ENCODE measurements at regions of chr9 and their contacts with region 1.

Region 1: DNA sequence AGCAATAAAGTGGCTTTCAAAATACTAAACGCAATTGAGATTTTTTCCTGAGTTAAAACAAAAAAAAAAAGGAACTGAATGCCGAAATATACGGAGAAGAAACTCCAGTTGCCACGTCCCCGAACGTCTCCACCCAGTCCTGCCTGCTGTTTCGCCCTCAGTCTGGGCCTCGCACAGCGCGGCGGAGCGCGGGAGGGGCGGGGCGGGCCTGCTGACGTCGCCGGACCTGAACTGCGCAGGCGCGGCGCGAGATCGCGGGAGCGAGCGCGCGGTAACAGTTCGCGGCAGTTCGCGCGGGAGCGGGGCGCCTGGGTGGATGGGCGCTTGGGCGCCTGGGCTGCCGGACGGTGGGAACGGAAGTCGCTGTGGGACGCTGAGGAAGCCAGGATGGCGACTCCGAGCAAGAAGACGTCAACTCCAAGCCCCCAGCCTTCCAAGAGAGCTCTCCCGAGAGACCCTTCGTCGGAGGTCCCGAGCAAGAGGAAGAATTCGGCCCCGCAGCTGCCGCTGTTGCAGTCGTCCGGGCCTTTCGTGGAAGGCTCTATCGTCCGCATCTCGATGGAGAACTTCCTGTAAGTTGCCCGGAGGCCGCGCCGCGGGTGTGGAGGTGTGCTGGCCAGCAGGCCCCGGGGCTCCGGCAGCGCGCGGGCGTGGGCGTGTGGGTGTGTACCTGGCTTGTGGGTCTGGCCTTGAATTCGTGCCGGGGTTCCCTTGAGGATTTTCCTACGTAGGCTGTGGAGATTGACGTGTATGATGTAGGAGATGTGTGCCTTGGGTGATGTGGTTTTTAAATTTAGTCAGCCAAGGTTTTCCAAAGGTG is at the start of gene SMC5:
- DNase-seq: peak; percentile 81 to 94 (median 93)
- ATAC-seq: peak; percentile 95
- H3K4me3 ChIP-seq: peak within 1 kb of the TSS; percentile 96
- H3K4me3 Mint-ChIP-seq: peak within 1 kb of the TSS; percentile 87 to 95 (median 91)
- H3K27ac ChIP-seq: peak within 1 kb of the TSS; percentile 94
- H3K27ac Mint-ChIP-seq: peak within 1 kb of the TSS; percentile 93 to 99 (median 98)
- H3K4me1 ChIP-seq: peaks cover 24 to 34% of the 10 kb centered on the region in 2 donors
- H3K4me1 Mint-ChIP-seq: peaks cover 45 to 79% (median 69%) of the 10 kb centered on the region in 7 donors
- H3K27me3 ChIP-seq: no peaks in the 10 kb centered on the region
- H3K27me3 Mint-ChIP-seq: peaks cover 0 to 12% (median 0%) of the 10 kb centered on the region in 5 donors
- total RNA-seq, gene SMC5: 26.2 to 44.6 (median 36.1) TPM

Region 2: DNA sequence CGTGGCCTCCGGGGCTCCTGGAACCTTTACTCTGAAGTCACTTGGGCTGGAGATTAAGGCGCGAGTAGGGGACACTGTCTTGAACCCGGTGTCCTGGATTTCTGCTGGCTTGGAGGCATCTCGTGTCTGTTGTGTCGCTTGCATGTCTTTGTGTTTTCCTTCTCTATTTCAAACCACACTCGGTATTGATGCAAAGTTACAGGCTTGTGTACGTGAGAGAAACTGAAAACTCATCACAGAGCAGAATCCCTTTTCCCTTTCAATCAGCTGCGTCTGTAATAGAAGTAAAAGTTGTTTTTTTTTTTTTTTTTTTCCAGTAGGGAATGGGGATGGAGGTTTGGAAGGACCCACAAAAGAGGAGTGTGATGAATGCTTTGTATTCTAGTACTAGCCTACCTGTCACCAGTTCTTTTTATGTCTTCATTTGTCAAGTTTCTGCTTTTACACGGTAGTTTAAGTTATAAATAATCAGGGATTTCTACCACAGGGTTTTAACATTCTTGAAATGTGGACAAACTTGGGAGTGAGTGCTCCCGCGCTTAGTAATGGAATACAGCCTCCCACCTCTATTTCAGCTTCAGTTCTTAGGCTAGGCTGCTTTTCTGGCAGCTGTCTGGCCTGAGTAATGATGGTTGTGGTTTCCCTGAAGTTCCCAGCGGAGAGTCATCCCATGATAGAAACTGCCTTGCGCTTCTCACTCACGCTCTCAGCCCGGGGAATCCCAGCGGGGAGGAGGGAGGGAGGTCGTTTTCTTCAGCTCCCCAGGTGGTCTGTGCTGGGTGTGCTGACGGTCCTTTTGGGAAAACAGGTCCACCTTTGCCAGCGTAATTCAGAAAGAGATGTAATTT is 1084.1 kb before region 1 on chr9:
- CTCF ChIA-PET with region 1: no interaction called
- POLR2A ChIA-PET with region 1: no interaction called
- intact Hi-C with region 1: loop called in 1 of 2 experiments (anchors 5 kb)
- DNase-seq: peak in 1 of 9 donors; percentile 69
- ATAC-seq: peak; percentile 57
- H3K4me3 ChIP-seq: peak overlapping the region; percentile 36
- H3K4me3 Mint-ChIP-seq: peak overlapping the region; percentile 76 to 92 (median 82)
- H3K27ac ChIP-seq: no peak overlapping the region
- H3K27ac Mint-ChIP-seq: peak overlapping the region in 1 of 9 donors; percentile 79
- H3K4me1 ChIP-seq: peaks cover 10 to 12% of the 10 kb centered on the region in 2 donors
- H3K4me1 Mint-ChIP-seq: peaks cover 25 to 60% (median 30%) of the 10 kb centered on the region in 7 donors
- H3K27me3 ChIP-seq: no peaks in the 10 kb centered on the region
- H3K27me3 Mint-ChIP-seq: peaks cover 15 to 43% (median 24%) of the 10 kb centered on the region in 5 donors

Region 3: GRCh38 chr9:70156729-70157128 is 102.2 kb before region 1 on chr9:
- CTCF ChIA-PET with region 1: no interaction called
- POLR2A ChIA-PET with region 1: no interaction called
- intact Hi-C with region 1: loop called in 1 of 2 experiments (anchors 5 kb)
- DNase-seq: no peak
- ATAC-seq: no peak
- H3K4me3 ChIP-seq: no peak overlapping the region
- H3K4me3 Mint-ChIP-seq: no peak overlapping the region
- H3K27ac ChIP-seq: no peak overlapping the region
- H3K27ac Mint-ChIP-seq: no peak overlapping the region
- H3K4me1 ChIP-seq: no peaks in the 10 kb centered on the region
- H3K4me1 Mint-ChIP-seq: peaks cover 0 to 2% (median 0%) of the 10 kb centered on the region in 7 donors
- H3K27me3 ChIP-seq: no peaks in the 10 kb centered on the region
- H3K27me3 Mint-ChIP-seq: peaks cover 6 to 23% (median 14%) of the 10 kb centered on the region in 5 donors

Region 4: GRCh38 chr9:70318002-70318401 is 59.1 kb after region 1 on chr9:
- CTCF ChIA-PET with region 1: no interaction called
- POLR2A ChIA-PET with region 1: no interaction called
- intact Hi-C with region 1: loop called in 1 of 2 experiments (anchors 5 kb)
- DNase-seq: no peak
- ATAC-seq: no peak
- H3K4me3 ChIP-seq: no peak overlapping the region
- H3K4me3 Mint-ChIP-seq: no peak overlapping the region
- H3K27ac ChIP-seq: no peak overlapping the region
- H3K27ac Mint-ChIP-seq: no peak overlapping the region
- H3K4me1 ChIP-seq: no peaks in the 10 kb centered on the region
- H3K4me1 Mint-ChIP-seq: peaks cover 0 to 8% (median 0%) of the 10 kb centered on the region in 7 donors
- H3K27me3 ChIP-seq: no peaks in the 10 kb centered on the region
- H3K27me3 Mint-ChIP-seq: no peaks in the 10 kb centered on the region

Region 5: DNA sequence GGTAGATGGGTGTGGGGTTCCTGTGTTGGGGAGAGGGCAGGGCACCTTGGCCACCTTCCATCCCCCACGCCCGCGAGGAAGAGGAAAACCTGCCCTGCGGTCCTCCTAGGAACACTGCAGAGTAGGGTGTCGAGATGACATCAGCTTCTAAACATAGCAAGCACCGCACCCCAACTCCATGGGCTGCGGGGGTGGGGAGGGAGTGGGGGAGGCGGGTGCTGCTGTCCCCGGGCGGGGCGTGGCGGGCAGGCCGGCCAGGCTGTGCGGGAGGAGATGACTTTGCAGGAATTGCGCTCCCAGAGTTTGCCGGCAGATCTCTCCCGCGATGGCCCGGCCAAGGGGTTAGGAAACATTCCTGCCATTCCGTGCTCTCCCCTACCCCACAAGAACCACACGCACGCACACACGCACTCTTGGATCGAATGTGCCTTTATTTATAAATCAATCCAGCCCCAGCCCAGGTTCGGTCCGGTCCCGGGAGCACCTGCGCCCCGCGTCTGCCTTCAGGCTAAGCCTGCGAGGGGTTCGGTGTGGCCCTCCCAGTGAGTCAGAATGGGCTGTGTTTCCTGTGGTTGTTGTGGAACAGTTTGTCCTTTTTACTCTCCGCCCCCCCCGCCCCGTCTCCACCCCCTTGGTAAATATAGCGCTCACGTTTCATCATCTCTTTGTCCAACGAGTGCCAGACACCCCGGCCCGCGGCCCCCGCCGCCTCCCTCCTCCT is 160.8 kb after region 1 on chr9:
- CTCF ChIA-PET with region 1: no interaction called
- POLR2A ChIA-PET with region 1: interaction called, 12 read pairs
- intact Hi-C with region 1: loop called (anchors 1 kb)
- DNase-seq: peak; percentile 69 to 92 (median 83)
- ATAC-seq: peak; percentile 69
- H3K4me3 ChIP-seq: peak overlapping the region; percentile 69
- H3K4me3 Mint-ChIP-seq: peak overlapping the region; percentile 87 to 99 (median 95)
- H3K27ac ChIP-seq: peak overlapping the region; percentile 92
- H3K27ac Mint-ChIP-seq: peak overlapping the region; percentile 75 to 100 (median 99)
- H3K4me1 ChIP-seq: peaks cover 38 to 43% of the 10 kb centered on the region in 2 donors
- H3K4me1 Mint-ChIP-seq: peaks cover 22 to 66% (median 42%) of the 10 kb centered on the region in 7 donors
- H3K27me3 ChIP-seq: no peaks in the 10 kb centered on the region
- H3K27me3 Mint-ChIP-seq: peaks cover 0 to 2% (median 0%) of the 10 kb centered on the region in 5 donors

Region 6: GRCh38 chr9:70602321-70603019 is 343.6 kb after region 1 on chr9:
- CTCF ChIA-PET with region 1: no interaction called
- POLR2A ChIA-PET with region 1: interaction called, 3 read pairs
- intact Hi-C with region 1: loop called in 1 of 2 experiments (anchors 2 kb)
- DNase-seq: peak in 7 of 9 donors; percentile 27 to 68 (median 52)
- ATAC-seq: peak; percentile 84
- H3K4me3 ChIP-seq: no peak overlapping the region
- H3K4me3 Mint-ChIP-seq: no peak overlapping the region
- H3K27ac ChIP-seq: no peak overlapping the region
- H3K27ac Mint-ChIP-seq: peak overlapping the region in 3 of 9 donors; percentile 32 to 79 (median 55)
- H3K4me1 ChIP-seq: no peaks in the 10 kb centered on the region
- H3K4me1 Mint-ChIP-seq: peaks cover 0 to 19% (median 5%) of the 10 kb centered on the region in 7 donors
- H3K27me3 ChIP-seq: no peaks in the 10 kb centered on the region
- H3K27me3 Mint-ChIP-seq: no peaks in the 10 kb centered on the region